Naive thymus-derived CD4-positive, alpha-beta T cell (primary cell): ENCODE measurements at regions of chr3 and their contacts with region 1.

Region 1: DNA sequence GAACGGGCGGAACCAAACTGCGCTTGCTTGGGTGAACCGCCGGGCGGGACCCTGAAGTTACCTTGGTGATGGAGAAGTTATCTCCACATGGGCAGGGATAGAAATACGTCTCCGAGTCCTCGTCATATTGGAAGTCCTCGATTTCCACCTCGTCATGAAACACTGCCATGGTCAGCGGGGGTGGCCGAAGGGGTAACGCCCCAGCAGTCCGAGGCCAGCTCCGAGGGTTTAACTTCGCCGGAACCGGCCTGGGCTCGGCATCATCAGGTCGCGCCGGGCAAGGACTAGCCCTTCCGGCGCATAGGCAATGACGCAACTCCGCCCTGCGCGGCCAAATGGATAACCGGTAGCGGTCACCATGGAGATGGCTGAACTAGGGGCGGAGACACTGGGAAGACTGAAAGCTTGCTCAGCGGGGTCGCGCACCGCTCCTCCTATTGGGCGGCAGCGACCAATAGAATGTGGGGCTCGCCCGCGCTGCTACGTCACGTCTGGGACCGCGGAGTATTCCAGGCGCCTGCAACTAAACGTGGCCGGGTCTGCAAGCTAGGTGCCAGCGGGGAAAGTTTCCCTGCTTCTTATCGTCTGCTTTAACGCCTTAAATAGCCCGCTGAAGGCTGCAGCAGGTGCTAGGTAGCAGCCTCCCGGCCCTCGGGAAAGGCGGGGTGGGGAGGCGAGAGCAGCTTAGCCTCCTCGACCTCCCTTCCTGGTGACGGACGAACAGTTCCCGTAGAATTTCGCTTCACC is at the starts of genes DPH3 and OXNAD1:
- DNase-seq: peak; percentile 97 to 99 (median 98)
- ATAC-seq: peak; percentile 96
- H3K4me3 ChIP-seq: peak within 1 kb of the TSS; percentile 85
- H3K4me3 Mint-ChIP-seq: peak within 1 kb of the TSS; percentile 85 to 100 (median 98)
- H3K27ac ChIP-seq: peak within 1 kb of the TSS; percentile 88
- H3K27ac Mint-ChIP-seq: peak within 1 kb of the TSS; percentile 96 to 100 (median 98)
- H3K4me1 ChIP-seq: peaks cover 13 to 28% of the 10 kb centered on the region in 2 donors
- H3K4me1 Mint-ChIP-seq: peaks cover 13 to 50% (median 43%) of the 10 kb centered on the region in 7 donors
- H3K27me3 ChIP-seq: no peaks in the 10 kb centered on the region
- H3K27me3 Mint-ChIP-seq: peaks cover 0 to 2% (median 0%) of the 10 kb centered on the region in 5 donors
- total RNA-seq, gene DPH3: 12.4 to 23.6 (median 15.7) TPM
- total RNA-seq, gene OXNAD1: 80.3 to 171 (median 152) TPM

Region 2: GRCh38 chr3:15601397-15602145 is 663.3 kb before region 1 on chr3 and contains the starts of genes BTD and HACL1:
- CTCF ChIA-PET with region 1: no interaction called
- POLR2A ChIA-PET with region 1: no interaction called
- intact Hi-C with region 1: loop called (anchors 1 kb)
- DNase-seq: peak; percentile 95 to 100 (median 99)
- ATAC-seq: peak; percentile 92
- H3K4me3 ChIP-seq: peak within 1 kb of the TSS; percentile 93
- H3K4me3 Mint-ChIP-seq: peak within 1 kb of the TSS; percentile 93 to 100 (median 99)
- H3K27ac ChIP-seq: peak within 1 kb of the TSS; percentile 89
- H3K27ac Mint-ChIP-seq: peak within 1 kb of the TSS; percentile 92 to 100 (median 99)
- H3K4me1 ChIP-seq: peaks cover 25 to 31% of the 10 kb centered on the region in 2 donors
- H3K4me1 Mint-ChIP-seq: peaks cover 34 to 67% (median 62%) of the 10 kb centered on the region in 7 donors
- H3K27me3 ChIP-seq: no peaks in the 10 kb centered on the region
- H3K27me3 Mint-ChIP-seq: no peaks in the 10 kb centered on the region
- total RNA-seq, gene BTD: 6.8 to 23.3 (median 15.5) TPM
- total RNA-seq, gene HACL1: 18.7 to 41.4 (median 35.4) TPM

Region 3: GRCh38 chr3:16309558-16309957 is 44.7 kb after region 1 on chr3:
- CTCF ChIA-PET with region 1: interaction called, 10 read pairs
- POLR2A ChIA-PET with region 1: interaction called, 18 read pairs
- intact Hi-C with region 1: no loop called
- DNase-seq: peak in 6 of 9 donors; percentile 51 to 86 (median 59)
- ATAC-seq: peak; percentile 83
- H3K4me3 ChIP-seq: no peak overlapping the region
- H3K4me3 Mint-ChIP-seq: peak overlapping the region; percentile 25 to 90 (median 78)
- H3K27ac ChIP-seq: peak overlapping the region; percentile 48
- H3K27ac Mint-ChIP-seq: peak overlapping the region; percentile 85 to 98 (median 91)
- H3K4me1 ChIP-seq: peaks cover 92 to 94% of the 10 kb centered on the region in 2 donors
- H3K4me1 Mint-ChIP-seq: peaks cover 74 to 97% (median 92%) of the 10 kb centered on the region in 7 donors
- H3K27me3 ChIP-seq: no peaks in the 10 kb centered on the region
- H3K27me3 Mint-ChIP-seq: no peaks in the 10 kb centered on the region

Region 4: GRCh38 chr3:16388850-16389441 is 124.1 kb after region 1 on chr3:
- CTCF ChIA-PET with region 1: no interaction called
- POLR2A ChIA-PET with region 1: no interaction called
- intact Hi-C with region 1: no loop called
- DNase-seq: no peak
- ATAC-seq: no peak
- H3K4me3 ChIP-seq: no peak overlapping the region
- H3K4me3 Mint-ChIP-seq: no peak overlapping the region
- H3K27ac ChIP-seq: no peak overlapping the region
- H3K27ac Mint-ChIP-seq: peak overlapping the region in 2 of 9 donors; percentile 46 to 56
- H3K4me1 ChIP-seq: no peaks in the 10 kb centered on the region
- H3K4me1 Mint-ChIP-seq: peaks cover 24 to 80% (median 54%) of the 10 kb centered on the region in 7 donors
- H3K27me3 ChIP-seq: no peaks in the 10 kb centered on the region
- H3K27me3 Mint-ChIP-seq: no peaks in the 10 kb centered on the region

Region 5: DNA sequence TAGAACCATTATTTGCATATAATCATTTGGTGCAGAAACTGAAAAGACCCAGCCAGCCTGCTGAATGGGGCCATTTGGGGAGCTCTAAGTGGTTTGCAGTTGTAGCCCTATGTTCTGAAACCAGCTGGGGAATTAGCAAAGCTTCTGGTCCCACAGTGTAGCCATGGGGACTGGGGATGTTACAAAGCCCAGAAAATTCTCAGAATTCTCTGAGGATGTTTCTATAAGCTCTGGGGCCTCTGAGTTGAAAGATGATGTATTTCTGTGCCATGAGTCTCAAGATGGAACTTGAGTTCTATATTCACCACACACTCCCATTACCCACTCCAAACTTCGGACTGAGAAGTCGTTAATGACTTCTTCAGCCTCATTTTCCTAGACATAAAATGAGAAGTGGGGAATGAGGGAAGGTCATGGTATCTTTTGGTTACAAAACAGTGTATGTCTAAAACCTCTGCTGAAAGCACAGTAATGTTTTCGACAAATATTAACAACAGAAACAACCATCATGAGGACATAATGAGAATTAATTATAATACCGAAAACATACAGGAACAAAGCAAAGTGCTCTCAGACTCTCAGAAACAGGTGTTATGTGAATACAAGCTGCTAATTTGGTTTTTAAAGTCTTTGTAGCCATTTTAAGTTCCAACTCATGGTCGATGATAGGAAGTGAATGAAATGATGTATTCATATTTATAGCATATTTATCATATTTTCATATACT is 159.2 kb after region 1 on chr3:
- CTCF ChIA-PET with region 1: no interaction called
- POLR2A ChIA-PET with region 1: no interaction called
- intact Hi-C with region 1: no loop called
- DNase-seq: no peak
- ATAC-seq: no peak
- H3K4me3 ChIP-seq: no peak overlapping the region
- H3K4me3 Mint-ChIP-seq: no peak overlapping the region
- H3K27ac ChIP-seq: no peak overlapping the region
- H3K27ac Mint-ChIP-seq: no peak overlapping the region
- H3K4me1 ChIP-seq: no peaks in the 10 kb centered on the region
- H3K4me1 Mint-ChIP-seq: peaks cover 17 to 47% (median 20%) of the 10 kb centered on the region in 7 donors
- H3K27me3 ChIP-seq: no peaks in the 10 kb centered on the region
- H3K27me3 Mint-ChIP-seq: no peaks in the 10 kb centered on the region

Region 6: DNA sequence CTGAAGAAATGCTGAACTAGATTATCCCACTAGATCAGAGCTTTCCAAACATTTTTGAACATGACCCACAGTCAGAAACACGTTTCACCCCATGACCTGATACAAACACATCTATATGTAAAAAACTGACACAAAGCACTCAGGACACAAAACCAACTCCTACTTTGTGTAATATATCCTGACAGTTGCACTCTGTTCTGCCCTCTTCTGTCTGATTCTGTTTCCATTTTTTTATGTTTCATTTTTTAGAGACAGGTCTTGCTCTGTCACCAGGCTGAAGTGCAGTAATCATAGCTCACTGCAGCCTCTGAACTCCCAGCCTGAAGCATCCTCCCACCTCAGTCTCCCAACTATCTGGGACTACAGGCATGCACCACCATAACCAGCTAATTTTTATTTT is 264.4 kb after region 1 on chr3:
- CTCF ChIA-PET with region 1: interaction called, 8 read pairs
- POLR2A ChIA-PET with region 1: interaction called, 3 read pairs
- intact Hi-C with region 1: loop called (anchors 1 to 5 kb)
- DNase-seq: peak in 5 of 9 donors; percentile 32 to 54 (median 39)
- ATAC-seq: peak; percentile 62
- H3K4me3 ChIP-seq: no peak overlapping the region
- H3K4me3 Mint-ChIP-seq: no peak overlapping the region
- H3K27ac ChIP-seq: no peak overlapping the region
- H3K27ac Mint-ChIP-seq: peak overlapping the region in 6 of 9 donors; percentile 26 to 72 (median 58)
- H3K4me1 ChIP-seq: no peaks in the 10 kb centered on the region
- H3K4me1 Mint-ChIP-seq: peaks cover 4 to 19% (median 12%) of the 10 kb centered on the region in 7 donors
- H3K27me3 ChIP-seq: no peaks in the 10 kb centered on the region
- H3K27me3 Mint-ChIP-seq: peaks cover 0 to 19% (median 0%) of the 10 kb centered on the region in 5 donors

Region 7: GRCh38 chr3:17151598-17152373 is 886.9 kb after region 1 on chr3:
- CTCF ChIA-PET with region 1: no interaction called
- POLR2A ChIA-PET with region 1: no interaction called
- intact Hi-C with region 1: loop called in 1 of 2 experiments (anchors 2 kb)
- DNase-seq: peak; percentile 27 to 81 (median 46)
- ATAC-seq: peak; percentile 87
- H3K4me3 ChIP-seq: peak overlapping the region; percentile 38
- H3K4me3 Mint-ChIP-seq: peak overlapping the region; percentile 38 to 86 (median 65)
- H3K27ac ChIP-seq: peak overlapping the region; percentile 45
- H3K27ac Mint-ChIP-seq: peak overlapping the region; percentile 41 to 95 (median 88)
- H3K4me1 ChIP-seq: peaks cover 18 to 33% of the 10 kb centered on the region in 2 donors
- H3K4me1 Mint-ChIP-seq: peaks cover 15 to 65% (median 28%) of the 10 kb centered on the region in 7 donors
- H3K27me3 ChIP-seq: no peaks in the 10 kb centered on the region
- H3K27me3 Mint-ChIP-seq: peaks cover 0 to 4% (median 0%) of the 10 kb centered on the region in 5 donors

Region 8: GRCh38 chr3:17882981-17883380 is 1618.1 kb after region 1 on chr3:
- CTCF ChIA-PET with region 1: no interaction called
- POLR2A ChIA-PET with region 1: no interaction called
- intact Hi-C with region 1: no loop called
- DNase-seq: no peak
- ATAC-seq: no peak
- H3K4me3 ChIP-seq: no peak overlapping the region
- H3K4me3 Mint-ChIP-seq: no peak overlapping the region
- H3K27ac ChIP-seq: no peak overlapping the region
- H3K27ac Mint-ChIP-seq: no peak overlapping the region
- H3K4me1 ChIP-seq: no peaks in the 10 kb centered on the region
- H3K4me1 Mint-ChIP-seq: no peaks in the 10 kb centered on the region
- H3K27me3 ChIP-seq: no peaks in the 10 kb centered on the region
- H3K27me3 Mint-ChIP-seq: peaks cover 0 to 9% (median 4%) of the 10 kb centered on the region in 5 donors